B cell (primary cell): ENCODE measurements at regions of chr5 and their contacts with region 1.

Region 1: GRCh38 chr5:33936004-33936380 is 194 bp upstream of the RXFP3 start:
- DNase-seq: peak; percentile 44
- ATAC-seq: no peak
- H3K4me3 ChIP-seq: no peak overlapping the region
- H3K4me3 Mint-ChIP-seq: no peak overlapping the region
- H3K27ac ChIP-seq: no peak overlapping the region
- H3K27ac Mint-ChIP-seq: no peak overlapping the region
- H3K4me1 ChIP-seq: peaks cover 13 to 20% of the 10 kb centered on the region in 2 donors
- H3K4me1 Mint-ChIP-seq: peaks cover 17% of the 10 kb centered on the region
- H3K27me3 ChIP-seq: peaks cover 0 to 41% (median 23%) of the 10 kb centered on the region in 4 experiments
- H3K27me3 Mint-ChIP-seq: peaks cover 39% of the 10 kb centered on the region
- CTCF ChIP-seq: no peak

Region 2: DNA sequence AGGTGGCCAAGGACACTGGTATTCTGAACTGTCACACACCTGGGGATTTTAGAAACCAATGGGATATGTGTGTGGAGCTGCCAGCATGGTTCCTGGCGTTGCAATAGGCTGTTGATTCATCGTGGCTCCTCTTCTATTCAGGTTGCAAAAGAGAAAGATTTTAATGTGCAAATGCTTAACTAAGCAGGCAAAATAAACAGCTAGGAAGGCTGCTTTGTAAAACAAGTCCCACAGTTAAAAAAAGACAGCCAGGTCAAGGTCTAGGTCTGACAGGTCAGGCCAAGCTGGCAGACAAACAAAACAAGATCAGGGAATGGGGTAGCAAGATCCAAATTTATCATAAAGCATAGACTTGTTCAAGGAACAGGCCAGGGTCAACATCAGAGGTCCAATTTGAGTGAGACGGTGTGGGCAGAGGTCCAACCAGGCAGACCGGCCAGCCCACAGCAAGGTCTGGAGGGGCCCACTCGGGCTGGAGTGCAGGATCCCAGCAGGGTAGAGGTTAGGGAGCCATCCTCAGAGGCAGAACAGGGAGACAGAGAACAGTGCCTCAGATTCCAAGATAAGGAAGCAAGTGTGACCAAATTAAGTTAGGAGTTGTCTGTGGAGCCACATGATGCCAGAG is 1305.0 kb before region 1 on chr5:
- CTCF ChIA-PET with region 1: no interaction called
- POLR2A ChIA-PET with region 1: no interaction called
- intact Hi-C with region 1: no loop called
- DNase-seq: no peak
- ATAC-seq: no peak
- H3K4me3 ChIP-seq: no peak overlapping the region
- H3K4me3 Mint-ChIP-seq: no peak overlapping the region
- H3K27ac ChIP-seq: no peak overlapping the region
- H3K27ac Mint-ChIP-seq: no peak overlapping the region
- H3K4me1 ChIP-seq: no peaks in the 10 kb centered on the region
- H3K4me1 Mint-ChIP-seq: no peaks in the 10 kb centered on the region
- H3K27me3 ChIP-seq: no peaks in the 10 kb centered on the region
- H3K27me3 Mint-ChIP-seq: peaks cover 4% of the 10 kb centered on the region
- CTCF ChIP-seq: no peak

Region 3: GRCh38 chr5:32916648-32917047 is 1019.3 kb before region 1 on chr5:
- CTCF ChIA-PET with region 1: no interaction called
- POLR2A ChIA-PET with region 1: no interaction called
- intact Hi-C with region 1: no loop called
- DNase-seq: no peak
- ATAC-seq: no peak
- H3K4me3 ChIP-seq: no peak overlapping the region
- H3K4me3 Mint-ChIP-seq: no peak overlapping the region
- H3K27ac ChIP-seq: no peak overlapping the region
- H3K27ac Mint-ChIP-seq: no peak overlapping the region
- H3K4me1 ChIP-seq: no peaks in the 10 kb centered on the region
- H3K4me1 Mint-ChIP-seq: no peaks in the 10 kb centered on the region
- H3K27me3 ChIP-seq: no peaks in the 10 kb centered on the region
- H3K27me3 Mint-ChIP-seq: no peaks in the 10 kb centered on the region
- CTCF ChIP-seq: no peak

Region 4: GRCh38 chr5:33470544-33470943 is 465.4 kb before region 1 on chr5:
- CTCF ChIA-PET with region 1: interaction called, 19 read pairs
- POLR2A ChIA-PET with region 1: no interaction called
- intact Hi-C with region 1: no loop called
- DNase-seq: no peak
- ATAC-seq: no peak
- H3K4me3 ChIP-seq: no peak overlapping the region
- H3K4me3 Mint-ChIP-seq: no peak overlapping the region
- H3K27ac ChIP-seq: no peak overlapping the region
- H3K27ac Mint-ChIP-seq: no peak overlapping the region
- H3K4me1 ChIP-seq: no peaks in the 10 kb centered on the region
- H3K4me1 Mint-ChIP-seq: peaks cover 5% of the 10 kb centered on the region
- H3K27me3 ChIP-seq: no peaks in the 10 kb centered on the region
- H3K27me3 Mint-ChIP-seq: no peaks in the 10 kb centered on the region
- CTCF ChIP-seq: no peak

Region 5: GRCh38 chr5:33588654-33589372 is 347.2 kb before region 1 on chr5:
- CTCF ChIA-PET with region 1: interaction called, 38 read pairs
- POLR2A ChIA-PET with region 1: no interaction called
- intact Hi-C with region 1: loop called (anchors 1 kb)
- DNase-seq: peak; percentile 37
- ATAC-seq: no peak
- H3K4me3 ChIP-seq: no peak overlapping the region
- H3K4me3 Mint-ChIP-seq: no peak overlapping the region
- H3K27ac ChIP-seq: no peak overlapping the region
- H3K27ac Mint-ChIP-seq: no peak overlapping the region
- H3K4me1 ChIP-seq: no peaks in the 10 kb centered on the region
- H3K4me1 Mint-ChIP-seq: no peaks in the 10 kb centered on the region
- H3K27me3 ChIP-seq: no peaks in the 10 kb centered on the region
- H3K27me3 Mint-ChIP-seq: no peaks in the 10 kb centered on the region
- CTCF ChIP-seq: peak; percentile 70

Region 6: DNA sequence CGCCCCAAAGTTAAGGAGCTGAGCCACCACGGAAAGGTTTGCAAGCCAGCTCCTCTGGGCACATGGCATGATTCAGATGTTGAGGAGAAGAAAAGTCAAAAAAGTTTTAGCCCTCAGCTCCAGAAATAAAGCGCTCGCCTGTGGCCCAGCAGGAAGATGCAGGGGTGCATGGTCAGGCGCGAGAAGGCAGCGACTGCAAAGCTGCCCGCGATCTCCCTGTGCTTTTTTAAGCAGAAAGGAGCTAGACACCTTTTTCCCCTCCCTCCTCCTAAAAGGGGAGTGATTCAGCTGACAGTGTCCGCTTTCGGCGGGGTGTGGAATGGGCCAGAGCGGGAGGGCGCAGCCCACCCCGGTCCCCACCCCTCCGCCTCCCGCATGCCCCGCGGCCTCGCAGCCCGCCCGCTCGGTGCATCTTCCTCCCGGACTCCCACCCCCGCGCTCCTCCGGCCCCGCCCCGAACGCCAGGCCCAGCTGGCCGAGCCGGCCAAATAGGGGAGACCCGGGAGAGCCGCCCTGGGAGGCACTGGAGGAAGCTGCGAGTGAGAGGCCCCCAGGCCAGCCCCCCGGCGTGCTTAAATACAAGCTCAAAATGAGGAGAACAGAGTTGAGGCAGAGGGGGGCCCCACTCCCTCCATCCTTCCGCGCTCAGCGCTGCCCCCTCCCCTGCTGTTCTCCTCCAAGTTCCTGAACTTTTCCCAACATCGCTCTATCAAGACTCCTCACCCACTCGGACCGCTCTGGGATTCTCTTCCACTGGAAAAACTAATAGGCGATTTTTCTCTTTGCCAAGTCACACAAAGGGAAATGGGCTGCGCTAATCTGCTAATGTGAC is 44.0 kb before region 1 on chr5 and contains the start of gene ADAMTS12:
- CTCF ChIA-PET with region 1: no interaction called
- POLR2A ChIA-PET with region 1: no interaction called
- intact Hi-C with region 1: no loop called
- DNase-seq: no peak
- ATAC-seq: no peak
- H3K4me3 ChIP-seq: no peak within 1 kb of the TSS
- H3K4me3 Mint-ChIP-seq: peak within 1 kb of the TSS; percentile 40
- H3K27ac ChIP-seq: no peak within 1 kb of the TSS
- H3K27ac Mint-ChIP-seq: no peak within 1 kb of the TSS
- H3K4me1 ChIP-seq: no peaks in the 10 kb centered on the region
- H3K4me1 Mint-ChIP-seq: peaks cover 4% of the 10 kb centered on the region
- H3K27me3 ChIP-seq: peaks cover 0 to 35% (median 28%) of the 10 kb centered on the region in 4 experiments
- H3K27me3 Mint-ChIP-seq: peaks cover 65% of the 10 kb centered on the region
- CTCF ChIP-seq: no peak
- total RNA-seq, gene ADAMTS12: not detected in 2 replicates

Region 7: DNA sequence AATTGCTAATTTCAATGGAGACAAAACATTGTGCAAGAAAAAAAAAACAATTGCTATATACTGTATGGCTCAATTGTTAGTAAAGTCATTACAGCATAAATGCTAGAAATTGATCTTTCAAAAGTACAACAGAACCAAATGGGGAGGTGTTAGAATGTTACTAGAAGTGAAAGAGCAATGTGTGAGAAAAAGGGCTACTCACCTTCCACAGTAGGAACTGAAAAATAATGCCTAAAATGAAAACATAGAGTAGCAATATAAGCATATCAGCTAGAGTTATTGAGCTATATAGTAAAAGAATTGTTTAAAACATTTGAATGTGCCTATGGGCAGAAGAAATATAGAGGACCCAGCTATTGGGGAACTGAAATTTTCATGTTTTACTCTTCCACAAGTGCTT is 10.7 kb before region 1 on chr5:
- CTCF ChIA-PET with region 1: interaction called, 18 read pairs
- POLR2A ChIA-PET with region 1: no interaction called
- intact Hi-C with region 1: no loop called
- DNase-seq: no peak
- ATAC-seq: no peak
- H3K4me3 ChIP-seq: no peak overlapping the region
- H3K4me3 Mint-ChIP-seq: no peak overlapping the region
- H3K27ac ChIP-seq: no peak overlapping the region
- H3K27ac Mint-ChIP-seq: no peak overlapping the region
- H3K4me1 ChIP-seq: no peaks in the 10 kb centered on the region
- H3K4me1 Mint-ChIP-seq: peaks cover 6% of the 10 kb centered on the region
- H3K27me3 ChIP-seq: peaks cover 0 to 4% (median 1%) of the 10 kb centered on the region in 4 experiments
- H3K27me3 Mint-ChIP-seq: peaks cover 31% of the 10 kb centered on the region
- CTCF ChIP-seq: no peak

Region 8: GRCh38 chr5:33969572-33970452 is 33.8 kb after region 1 on chr5:
- CTCF ChIA-PET with region 1: interaction called, 11 read pairs
- POLR2A ChIA-PET with region 1: no interaction called
- intact Hi-C with region 1: no loop called
- DNase-seq: peak; percentile 14
- ATAC-seq: no peak
- H3K4me3 ChIP-seq: no peak overlapping the region
- H3K4me3 Mint-ChIP-seq: no peak overlapping the region
- H3K27ac ChIP-seq: no peak overlapping the region
- H3K27ac Mint-ChIP-seq: no peak overlapping the region
- H3K4me1 ChIP-seq: no peaks in the 10 kb centered on the region
- H3K4me1 Mint-ChIP-seq: no peaks in the 10 kb centered on the region
- H3K27me3 ChIP-seq: peaks cover 0 to 5% (median 0%) of the 10 kb centered on the region in 4 experiments
- H3K27me3 Mint-ChIP-seq: peaks cover 3% of the 10 kb centered on the region
- CTCF ChIP-seq: peak; percentile 53